ENCODE measurements at regions of chr6 and their contacts with region 1.

Region 1: DNA sequence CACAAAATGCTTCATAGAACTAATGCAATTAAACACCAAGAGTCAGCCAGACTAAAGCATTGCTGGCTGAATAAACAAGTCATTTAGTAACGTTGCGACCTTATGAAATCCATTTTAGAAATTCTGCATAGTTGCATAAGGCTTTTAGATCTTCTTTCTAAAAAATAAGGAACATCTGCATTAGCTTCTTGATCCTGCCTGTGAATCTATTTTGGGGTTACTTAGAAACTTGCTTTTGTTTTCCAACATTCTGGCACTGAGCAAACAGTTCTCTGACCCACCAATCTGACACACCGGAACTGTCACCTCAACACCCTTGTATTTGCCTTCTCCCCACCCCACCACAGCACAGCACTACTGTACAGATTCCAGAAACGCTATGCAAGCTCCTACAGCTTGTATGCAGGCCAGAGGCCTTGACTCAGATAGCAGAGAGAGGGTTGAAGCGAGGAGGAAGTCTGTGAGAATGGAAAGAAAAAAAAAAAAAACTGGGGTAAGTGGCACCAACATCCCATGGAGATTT is 55.0 kb downstream of the KIF13A start:
- DNase-seq: peak in 1 of 2 donors; percentile 59
- ATAC-seq: peak; percentile 77
- H3K4me3 ChIP-seq: no peak overlapping the region
- H3K27ac ChIP-seq: peak overlapping the region; percentile 64 to 84
- H3K4me1 ChIP-seq: peaks cover 9 to 22% of the 10 kb centered on the region in 2 donors
- H3K27me3 ChIP-seq: no peaks in the 10 kb centered on the region

Region 2: DNA sequence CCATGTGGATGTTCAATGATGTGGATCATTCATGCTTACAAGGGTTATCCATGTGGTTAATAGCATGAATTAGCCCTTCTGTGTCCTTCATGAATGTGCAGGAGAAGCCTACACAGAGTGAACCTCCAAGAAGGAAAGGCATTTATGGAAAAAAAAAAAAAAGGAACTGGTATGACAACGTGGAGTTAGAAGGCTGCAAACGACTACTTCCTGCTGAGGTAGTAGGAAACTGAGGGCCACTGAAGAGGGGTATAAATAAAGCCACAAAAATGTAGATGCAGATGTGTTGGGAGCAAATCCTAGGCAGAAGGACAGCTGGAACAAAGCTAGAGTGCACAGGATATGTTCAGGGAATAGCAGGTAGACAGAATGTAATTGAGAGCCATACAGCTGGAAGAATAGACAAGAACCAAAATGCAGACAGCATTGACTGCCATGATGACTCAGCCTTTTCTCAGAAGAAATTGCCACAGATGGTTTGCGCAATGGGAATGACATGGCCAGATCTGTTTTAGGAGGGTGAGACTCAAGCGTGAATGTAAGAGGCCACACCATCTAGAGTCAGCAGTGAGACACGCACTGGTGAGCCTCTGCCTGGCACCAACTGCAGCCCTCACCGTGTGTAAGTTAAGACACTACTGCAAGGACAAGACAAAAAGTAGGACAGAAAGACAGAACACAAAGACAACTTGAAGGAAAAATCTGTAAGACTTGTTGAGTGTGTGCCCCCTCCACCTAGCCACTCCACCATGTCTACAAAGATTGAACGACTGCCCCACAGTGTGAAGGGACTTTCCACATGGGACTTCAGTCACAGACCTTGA is 24.8 kb before region 1 on chr6:
- intact Hi-C with region 1: no loop called
- DNase-seq: peak; percentile 77 to 81
- ATAC-seq: peak; percentile 84
- H3K4me3 ChIP-seq: no peak overlapping the region
- H3K27ac ChIP-seq: no peak overlapping the region
- H3K4me1 ChIP-seq: peaks cover 10% of the 10 kb centered on the region in 2 donors
- H3K27me3 ChIP-seq: no peaks in the 10 kb centered on the region

Region 3: DNA sequence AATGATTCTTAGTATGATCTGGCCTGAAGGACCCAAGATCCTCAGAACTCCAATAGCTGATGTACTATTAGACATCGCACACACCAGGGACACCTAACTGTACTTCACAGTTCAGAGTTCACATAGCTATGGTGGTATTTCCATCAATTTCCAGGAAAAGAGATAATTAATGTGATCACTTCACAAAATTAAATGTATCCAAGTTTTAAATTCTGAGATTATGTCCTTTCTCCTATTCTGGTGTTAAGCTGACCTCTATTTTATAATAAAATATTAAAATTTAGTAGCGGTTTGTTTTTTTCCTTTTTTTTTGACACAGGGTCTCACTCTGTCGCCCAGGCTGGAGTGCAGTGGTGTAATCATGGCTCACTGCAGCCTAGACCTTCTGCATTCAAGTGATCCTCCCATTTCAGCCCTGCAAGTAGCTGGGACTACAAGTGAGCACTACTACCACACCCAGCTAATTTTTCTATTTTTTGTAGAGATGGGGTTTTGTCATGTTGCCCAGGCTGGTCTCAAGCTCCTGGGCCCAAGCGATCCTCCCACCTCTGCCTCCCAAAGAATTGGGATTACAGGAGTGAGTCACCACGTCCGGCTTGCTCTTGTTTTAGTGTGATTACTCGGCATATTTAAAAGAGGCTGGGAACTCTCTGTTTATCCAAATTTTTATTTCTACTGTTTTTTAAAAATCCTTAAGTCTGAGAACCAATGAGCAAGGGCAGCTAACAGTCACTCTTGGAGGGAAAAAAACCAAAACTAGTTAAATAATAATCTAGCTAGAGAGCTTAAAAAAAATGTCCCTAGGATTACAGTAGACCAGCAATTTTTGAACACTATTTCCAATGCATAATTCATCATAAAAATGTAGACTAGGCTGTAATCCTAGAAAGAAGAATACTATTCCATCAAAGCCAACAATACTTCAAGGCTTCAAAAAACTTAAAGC is 39.0 kb after region 1 on chr6:
- intact Hi-C with region 1: loop called (anchors 5 kb)
- DNase-seq: peak in 1 of 2 donors; percentile 72
- ATAC-seq: peak; percentile 78
- H3K4me3 ChIP-seq: no peak overlapping the region
- H3K27ac ChIP-seq: no peak overlapping the region
- H3K4me1 ChIP-seq: peaks cover 0 to 8% of the 10 kb centered on the region in 2 donors
- H3K27me3 ChIP-seq: no peaks in the 10 kb centered on the region

Measured in aorta (tissue), 5 donors.